ENCODE measurements at regions of chr10 and their contacts with region 1.

Region 1: GRCh38 chr10:71618176-71618575 is 101.4 kb downstream of the C10orf105 start:
- DNase-seq: no peak
- H3K4me3 ChIP-seq: no peak overlapping the region
- H3K27ac ChIP-seq: no peak overlapping the region
- H3K4me1 ChIP-seq: peaks cover 49% of the 10 kb centered on the region
- CTCF ChIP-seq: no peak

Region 2: GRCh38 chr10:71512775-71513539 is 105.2 kb before region 1 on chr10:
- CTCF ChIA-PET with region 1: no interaction called
- POLR2A ChIA-PET with region 1: no interaction called
- intact Hi-C with region 1: no loop called
- DNase-seq: no peak
- H3K4me3 ChIP-seq: no peak overlapping the region
- H3K27ac ChIP-seq: no peak overlapping the region
- H3K4me1 ChIP-seq: no peaks in the 10 kb centered on the region
- CTCF ChIP-seq: no peak

Region 3: GRCh38 chr10:71663311-71663710 is 45.1 kb after region 1 on chr10:
- CTCF ChIA-PET with region 1: interaction called, 10 read pairs
- POLR2A ChIA-PET with region 1: no interaction called
- intact Hi-C with region 1: no loop called
- DNase-seq: no peak
- H3K4me3 ChIP-seq: no peak overlapping the region
- H3K27ac ChIP-seq: no peak overlapping the region
- H3K4me1 ChIP-seq: peaks cover 44% of the 10 kb centered on the region
- CTCF ChIP-seq: no peak

Measured in OCI-LY7 (cell line).